Activated T-helper 2 cell treated with anti-CD3 and anti-CD28 coated beads, Interferon-gamma antibody, Interleukin-2, Interleukin-4, amounts not matched to agents 10 μg/mL and 5 μg/mL and 100 μg/mL, durations not matched to agents 14 hours and 24 hours and 36 hours (primary cell): ENCODE measurements at regions of chr10 and their contacts with region 1.

Region 1: DNA sequence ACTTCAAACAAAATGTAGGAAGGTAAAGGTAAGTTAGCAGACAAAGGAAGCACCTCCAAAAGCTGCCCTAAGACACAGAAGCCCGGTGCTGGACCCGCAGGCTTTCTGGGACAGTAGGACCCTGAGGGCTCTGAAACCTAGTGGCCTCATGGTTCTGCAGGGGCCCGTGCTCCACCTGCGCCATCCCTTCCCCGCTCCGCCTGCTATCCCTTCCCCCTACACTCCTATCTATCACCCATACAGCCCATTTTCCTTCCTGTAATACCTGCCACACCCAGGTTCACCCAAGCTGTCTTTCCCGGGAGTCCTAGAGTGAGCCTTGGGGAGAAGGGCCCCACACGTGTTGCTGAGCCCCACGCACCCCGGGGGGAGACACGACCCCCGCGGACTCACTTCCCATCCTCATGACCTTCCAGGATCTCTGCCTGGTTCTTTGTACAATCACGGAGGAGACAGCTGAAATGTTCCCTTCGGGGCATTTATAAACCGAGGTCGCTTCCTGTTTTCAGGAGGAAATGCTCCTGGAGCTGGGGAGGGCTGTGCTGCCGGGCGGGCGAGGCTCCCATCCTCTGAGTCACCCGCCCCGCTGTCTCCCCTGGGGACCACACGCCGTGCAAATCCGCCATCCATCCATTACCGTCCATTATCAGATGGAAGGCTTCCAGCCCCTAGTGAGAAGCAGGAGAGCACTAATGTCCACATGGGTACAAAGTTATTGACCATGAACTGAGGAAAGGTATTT is 251.7 kb upstream of the PITRM1 start:
- DNase-seq: no peak
- H3K4me3 Mint-ChIP-seq: no peak overlapping the region
- H3K27ac Mint-ChIP-seq: no peak overlapping the region
- H3K4me1 Mint-ChIP-seq: peaks cover 33% of the 10 kb centered on the region
- H3K27me3 Mint-ChIP-seq: peaks cover 16% of the 10 kb centered on the region

Region 2: DNA sequence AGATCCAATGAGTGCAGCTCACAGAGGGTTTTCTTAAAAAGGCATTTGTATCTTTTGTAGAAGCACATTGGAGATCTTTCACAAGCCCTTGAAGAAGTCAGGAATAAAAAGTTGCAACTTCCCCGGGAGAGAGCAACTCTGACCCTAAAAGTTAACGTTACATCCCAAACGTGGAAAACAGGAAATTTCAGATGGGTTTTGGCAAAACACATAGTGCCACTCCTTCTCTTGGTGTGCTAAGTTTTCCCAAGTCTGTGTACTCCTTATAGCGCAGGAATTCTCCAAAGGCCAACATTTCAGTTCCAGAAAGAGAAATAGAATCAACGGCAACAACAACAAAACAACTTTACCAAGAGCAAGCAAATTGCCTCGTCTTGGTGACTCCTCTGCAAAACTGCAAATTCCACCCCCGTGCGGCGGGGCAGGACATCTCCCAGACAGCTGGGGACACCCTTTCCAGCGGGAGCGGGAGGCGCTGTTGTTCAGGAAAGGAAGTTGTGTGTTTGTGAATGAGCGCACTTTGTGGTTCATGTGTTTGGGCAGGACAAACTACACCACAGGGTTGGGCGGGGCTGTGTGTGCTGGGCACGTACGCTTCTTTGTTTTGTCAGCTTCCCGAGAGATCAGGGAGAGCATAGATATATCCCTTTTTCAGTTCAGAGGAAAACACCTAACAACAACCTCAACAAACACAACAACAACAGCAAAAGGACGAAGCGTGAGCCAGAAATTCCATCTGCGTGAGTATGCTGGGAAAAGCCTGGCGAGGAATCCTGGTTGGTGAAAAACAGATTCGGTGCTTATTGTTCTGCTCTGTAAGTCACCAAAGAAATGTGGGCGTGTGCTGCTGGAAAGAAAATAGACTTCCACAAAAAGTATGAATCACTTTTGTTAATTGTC is 43.0 kb after region 1 on chr10:
- intact Hi-C with region 1: loop called (anchors 5 kb)
- DNase-seq: no peak
- H3K4me3 Mint-ChIP-seq: peak overlapping the region; percentile 73
- H3K27ac Mint-ChIP-seq: peak overlapping the region; percentile 92
- H3K4me1 Mint-ChIP-seq: peaks cover 63% of the 10 kb centered on the region
- H3K27me3 Mint-ChIP-seq: no peaks in the 10 kb centered on the region